AG04449 (cell line): ENCODE measurements at regions of chr5 and their contacts with region 1.

Region 1: DNA sequence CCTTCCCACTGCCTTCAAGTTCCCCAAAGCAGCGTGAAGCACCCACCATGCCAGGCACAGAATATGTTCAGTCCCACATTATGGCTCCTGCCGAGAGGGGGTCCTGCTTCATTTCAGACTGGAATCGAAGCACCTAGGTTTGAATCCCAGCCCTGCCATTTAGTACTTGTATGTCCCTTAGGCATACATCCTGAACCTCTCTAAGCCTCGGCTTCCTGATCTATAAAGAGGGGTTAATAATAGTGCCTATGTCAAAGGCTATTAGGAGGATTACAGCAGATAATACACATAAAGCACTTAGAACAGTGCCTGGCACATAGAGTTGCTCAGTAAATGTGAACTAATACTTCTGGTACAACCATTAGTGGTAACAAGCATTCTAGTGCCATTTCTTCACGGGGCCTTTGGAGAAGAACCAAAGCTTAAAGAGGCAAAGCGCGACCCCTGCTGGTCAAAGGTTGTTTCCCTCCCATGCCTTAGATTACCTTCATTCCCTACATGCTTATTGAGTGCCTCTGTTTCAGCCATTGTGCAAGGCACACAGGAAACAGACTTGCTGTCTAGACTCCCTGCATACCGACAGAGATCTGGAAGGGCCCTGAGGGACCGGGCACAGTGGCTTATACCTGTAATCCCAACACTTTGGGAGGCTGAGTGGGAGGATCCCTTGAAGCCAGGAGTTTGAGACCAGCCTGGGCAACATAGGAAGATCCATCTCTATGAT is 98.2 kb downstream of the PPARGC1B start:
- DNase-seq: peak; percentile 79
- H3K4me3 ChIP-seq: no peak overlapping the region
- CTCF ChIP-seq: peak; percentile 88

Region 2: DNA sequence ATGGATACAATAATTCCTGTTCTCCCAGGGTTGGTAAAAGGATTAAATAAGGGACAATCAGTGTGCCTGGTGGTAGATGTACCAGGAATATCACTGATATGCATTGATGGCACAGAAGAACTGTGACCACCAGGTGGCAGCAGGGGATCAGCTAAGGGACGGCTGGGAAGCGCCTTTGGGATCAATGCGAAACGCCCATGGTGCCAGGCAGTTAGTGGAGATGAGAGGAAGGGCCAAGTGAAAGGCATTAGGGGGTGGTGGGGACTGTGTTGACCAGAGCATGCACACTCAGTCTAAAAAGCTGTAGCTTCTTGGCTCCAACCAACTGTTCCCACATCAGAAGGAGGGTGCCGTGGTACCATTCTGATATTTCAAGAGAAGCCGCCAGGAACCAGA is 191.5 kb before region 1 on chr5:
- CTCF ChIA-PET with region 1: interaction called, 924 read pairs
- POLR2A ChIA-PET with region 1: interaction called, 3 read pairs
- DNase-seq: no peak
- H3K4me3 ChIP-seq: no peak overlapping the region
- CTCF ChIP-seq: peak; percentile 86

Region 3: DNA sequence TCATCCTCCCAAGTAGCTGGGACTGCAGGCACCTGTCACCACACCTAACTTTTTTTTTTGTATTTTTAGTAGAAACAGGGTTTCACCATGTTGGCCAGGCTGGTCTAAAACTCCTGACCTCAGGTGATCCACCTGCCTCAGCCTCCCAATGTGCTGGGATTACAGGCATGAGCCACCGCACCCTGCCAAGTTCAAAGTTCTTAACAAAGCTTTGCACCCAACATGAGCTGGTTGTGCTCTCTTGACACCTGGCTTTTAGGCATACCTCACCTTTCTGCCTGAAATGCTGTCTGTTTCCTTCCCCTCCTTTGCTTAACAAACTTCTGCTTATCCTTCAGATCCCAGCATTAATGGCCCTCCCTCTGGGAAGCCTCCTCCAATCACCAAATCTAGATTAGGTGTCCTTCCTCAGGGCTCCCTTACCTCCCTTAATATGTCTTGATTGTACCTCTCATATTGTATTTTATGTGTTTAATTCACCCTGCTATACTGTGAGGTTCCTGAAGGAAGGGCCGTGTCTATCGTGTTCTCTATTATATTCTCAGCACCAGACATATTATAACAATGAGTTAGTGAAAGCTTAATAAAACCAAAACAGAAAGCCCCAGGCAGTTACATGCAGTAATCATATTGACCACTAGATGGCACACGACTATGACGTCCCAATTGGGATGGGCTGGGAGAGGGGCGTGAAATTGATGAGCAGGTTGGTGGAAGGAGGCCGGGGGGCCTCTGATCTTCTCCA is 161.1 kb before region 1 on chr5:
- CTCF ChIA-PET with region 1: interaction called, 106 read pairs
- POLR2A ChIA-PET with region 1: no interaction called
- DNase-seq: no peak
- H3K4me3 ChIP-seq: no peak overlapping the region
- CTCF ChIP-seq: peak; percentile 54

Region 4: DNA sequence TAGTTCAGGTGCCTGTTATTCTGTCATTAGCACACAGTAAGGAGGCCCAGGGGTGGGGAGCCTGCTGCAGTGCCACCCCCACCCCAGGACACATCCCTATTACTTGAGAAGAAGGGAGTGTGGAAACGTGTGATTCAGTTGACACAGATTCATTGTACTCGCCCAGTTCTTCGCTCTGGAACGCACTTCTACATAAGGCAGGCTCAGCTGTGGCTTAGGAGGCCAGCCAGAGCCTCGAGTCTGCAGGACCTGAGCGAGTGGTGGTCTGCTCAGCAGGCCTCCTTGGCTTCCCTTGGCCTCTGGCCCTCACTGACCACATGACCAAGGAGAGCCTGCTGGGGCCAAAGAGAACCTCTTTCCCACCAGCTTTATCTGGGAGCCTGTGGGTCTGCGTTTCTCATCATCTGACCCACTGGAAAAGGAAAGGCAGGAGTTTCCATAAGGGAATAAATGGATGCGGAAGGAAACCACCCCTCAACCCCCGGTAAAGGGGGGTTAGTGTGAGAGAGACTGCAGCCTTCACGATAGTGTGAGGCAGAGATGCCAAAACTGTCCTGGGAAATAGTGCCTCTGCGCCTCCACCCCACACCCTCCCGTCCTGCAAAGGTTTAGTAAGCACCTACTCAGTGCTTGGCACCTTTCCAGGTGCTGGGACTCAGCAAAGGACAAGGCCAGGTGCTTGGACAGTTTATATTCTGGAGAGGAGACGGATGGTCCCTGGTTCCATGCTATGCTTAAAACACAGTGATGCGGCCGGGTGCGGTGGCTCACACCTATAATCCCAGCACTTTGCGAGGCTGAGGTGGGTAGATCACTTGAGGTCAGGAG is 24.5 kb before region 1 on chr5:
- CTCF ChIA-PET with region 1: interaction called, 10 read pairs
- POLR2A ChIA-PET with region 1: no interaction called
- DNase-seq: no peak
- H3K4me3 ChIP-seq: no peak overlapping the region
- CTCF ChIP-seq: no peak

Region 5: GRCh38 chr5:149852641-149853330 is 24.5 kb after region 1 on chr5:
- CTCF ChIA-PET with region 1: interaction called, 568 read pairs
- POLR2A ChIA-PET with region 1: no interaction called
- DNase-seq: peak; percentile 29
- H3K4me3 ChIP-seq: no peak overlapping the region
- CTCF ChIP-seq: peak; percentile 86

Region 6: DNA sequence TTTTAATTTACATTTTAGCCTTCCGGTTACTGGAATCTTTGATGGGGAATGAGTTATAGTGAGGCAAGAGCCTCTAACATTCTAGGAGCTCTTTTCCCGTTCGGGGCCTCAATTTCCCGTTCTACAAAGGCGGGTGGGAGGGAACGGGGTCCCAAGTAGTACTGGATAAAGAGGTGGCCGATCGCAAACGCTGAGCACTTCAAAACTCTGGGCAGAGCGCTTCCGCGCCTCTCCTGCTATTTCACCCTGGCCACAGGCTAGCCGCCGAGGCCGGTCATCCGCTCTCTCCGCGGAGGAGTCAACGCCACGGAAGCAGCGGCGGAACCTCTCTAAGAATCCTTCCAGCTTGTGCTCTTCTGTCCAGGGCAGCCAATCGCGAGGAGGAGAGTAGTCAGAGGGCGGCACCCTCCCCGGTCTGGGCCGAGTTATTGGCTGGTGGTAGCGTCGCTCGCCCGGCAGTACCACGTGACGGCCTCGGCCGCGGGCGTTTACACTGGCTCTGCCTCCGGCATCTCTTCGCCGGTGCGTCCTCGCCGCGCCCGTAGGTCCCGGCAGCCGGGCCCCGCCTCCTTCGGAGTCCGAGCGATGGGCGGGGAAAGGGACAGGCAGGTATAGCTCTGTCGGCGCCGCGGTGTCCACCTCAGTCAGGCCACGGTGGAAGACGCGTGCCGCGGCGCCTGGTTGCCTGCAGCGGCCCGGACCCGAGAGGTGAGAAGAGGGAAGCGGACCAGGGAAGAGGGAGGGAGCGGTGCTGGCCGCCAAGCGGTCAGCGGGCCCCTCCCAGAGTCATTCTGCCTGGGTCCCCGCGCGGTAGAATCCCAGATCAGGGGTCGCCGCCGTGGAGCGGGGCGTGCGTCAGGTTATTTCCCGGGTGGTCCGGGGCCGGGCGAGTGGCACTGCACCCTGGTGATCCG is 132.2 kb after region 1 on chr5 and contains the start of gene SLC26A2:
- CTCF ChIA-PET with region 1: interaction called, 429 read pairs
- POLR2A ChIA-PET with region 1: no interaction called
- DNase-seq: peak; percentile 87
- H3K4me3 ChIP-seq: peak within 1 kb of the TSS; percentile 78
- CTCF ChIP-seq: no peak